ENCODE measurements at regions of chr17 and their contacts with region 1.

Region 1: GRCh38 chr17:81094509-81095382 is 59.8 kb downstream of the BAIAP2 start:
- DNase-seq: peak; percentile 96
- H3K4me3 ChIP-seq: no peak overlapping the region; the same call in 1 of the 2 replicates
- H3K27ac ChIP-seq: peak overlapping the region; percentile 90
- H3K4me1 ChIP-seq: peaks cover 59% of the 10 kb centered on the region
- H3K27me3 ChIP-seq: no peaks in the 10 kb centered on the region
- CTCF ChIP-seq: no peak

Region 2: DNA sequence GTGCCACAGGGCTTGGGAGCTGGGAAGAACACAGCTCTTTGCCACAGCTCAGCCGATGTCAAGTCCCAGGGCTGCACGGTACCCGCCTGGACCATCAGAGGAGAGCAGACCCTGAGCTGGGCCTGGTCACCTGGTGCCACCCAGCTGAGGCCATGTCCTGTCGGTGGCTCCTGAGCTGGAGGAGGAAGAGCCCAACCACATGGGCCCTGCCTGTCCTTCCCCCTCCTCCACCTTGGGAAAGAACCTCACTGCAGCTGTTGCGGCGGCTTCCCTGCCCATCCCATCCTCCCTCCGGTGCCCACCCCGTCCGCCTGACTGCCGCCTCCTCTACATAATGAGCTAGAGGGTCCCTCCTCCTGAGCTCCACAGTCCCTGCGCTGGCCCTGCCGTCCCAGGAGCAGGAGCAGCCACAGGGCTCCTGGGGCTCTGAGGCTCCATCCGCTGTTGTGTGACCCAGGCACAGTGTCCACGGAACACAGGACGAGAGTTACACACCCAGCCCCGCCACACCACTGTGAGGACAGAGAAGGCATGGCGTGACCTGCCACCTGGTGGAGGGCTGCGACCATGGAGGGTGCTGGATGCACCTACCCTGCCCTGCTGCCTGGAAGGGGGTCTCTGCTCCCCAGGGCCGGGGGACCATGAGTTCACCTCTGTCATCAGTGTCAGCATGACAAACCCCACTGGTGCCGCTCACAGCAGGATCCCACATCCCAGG is 124.5 kb before region 1 on chr17:
- CTCF ChIA-PET with region 1: interaction called, 11 read pairs
- POLR2A ChIA-PET with region 1: no interaction called
- intact Hi-C with region 1: no loop called
- DNase-seq: peak in 1 of 2 experiments; percentile 37
- H3K4me3 ChIP-seq: no peak overlapping the region
- H3K27ac ChIP-seq: no peak overlapping the region
- H3K4me1 ChIP-seq: no peaks in the 10 kb centered on the region
- H3K27me3 ChIP-seq: no peaks in the 10 kb centered on the region
- CTCF ChIP-seq: peak; percentile 41; the same call in 1 of the 2 replicates

Region 3: DNA sequence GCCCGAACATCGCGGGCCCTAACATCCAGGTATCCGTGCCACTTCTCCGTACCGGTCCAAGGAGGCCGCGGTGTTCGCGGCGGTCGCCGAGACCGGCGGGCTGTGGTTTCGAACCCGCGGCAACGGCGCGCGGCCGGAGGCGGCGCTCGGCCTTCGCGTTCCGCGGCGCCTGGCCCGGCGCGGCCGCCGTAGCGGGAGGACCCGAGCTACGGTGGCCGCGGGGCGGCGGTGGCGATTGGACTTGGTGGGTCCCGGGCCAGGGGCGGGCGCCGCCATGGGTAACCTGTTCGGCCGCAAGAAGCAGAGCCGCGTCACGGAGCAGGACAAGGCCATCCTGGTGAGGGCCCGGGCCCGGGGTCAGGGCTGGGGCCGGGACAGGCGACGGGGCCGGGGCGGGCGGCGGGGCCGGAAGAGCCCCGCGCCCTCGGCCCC is 103.1 kb before region 1 on chr17 and contains the start of gene CHMP6:
- CTCF ChIA-PET with region 1: no interaction called
- POLR2A ChIA-PET with region 1: no interaction called
- intact Hi-C with region 1: loop called (anchors 1 kb)
- DNase-seq: peak; percentile 37 to 71
- H3K4me3 ChIP-seq: peak within 1 kb of the TSS; percentile 74
- H3K27ac ChIP-seq: no peak within 1 kb of the TSS
- H3K4me1 ChIP-seq: peaks cover 16% of the 10 kb centered on the region
- H3K27me3 ChIP-seq: no peaks in the 10 kb centered on the region
- CTCF ChIP-seq: peak; percentile 35; the same call in 1 of the 2 replicates
- total RNA-seq, gene CHMP6: 17.4 and 18.1 TPM in 2 replicates

Region 4: DNA sequence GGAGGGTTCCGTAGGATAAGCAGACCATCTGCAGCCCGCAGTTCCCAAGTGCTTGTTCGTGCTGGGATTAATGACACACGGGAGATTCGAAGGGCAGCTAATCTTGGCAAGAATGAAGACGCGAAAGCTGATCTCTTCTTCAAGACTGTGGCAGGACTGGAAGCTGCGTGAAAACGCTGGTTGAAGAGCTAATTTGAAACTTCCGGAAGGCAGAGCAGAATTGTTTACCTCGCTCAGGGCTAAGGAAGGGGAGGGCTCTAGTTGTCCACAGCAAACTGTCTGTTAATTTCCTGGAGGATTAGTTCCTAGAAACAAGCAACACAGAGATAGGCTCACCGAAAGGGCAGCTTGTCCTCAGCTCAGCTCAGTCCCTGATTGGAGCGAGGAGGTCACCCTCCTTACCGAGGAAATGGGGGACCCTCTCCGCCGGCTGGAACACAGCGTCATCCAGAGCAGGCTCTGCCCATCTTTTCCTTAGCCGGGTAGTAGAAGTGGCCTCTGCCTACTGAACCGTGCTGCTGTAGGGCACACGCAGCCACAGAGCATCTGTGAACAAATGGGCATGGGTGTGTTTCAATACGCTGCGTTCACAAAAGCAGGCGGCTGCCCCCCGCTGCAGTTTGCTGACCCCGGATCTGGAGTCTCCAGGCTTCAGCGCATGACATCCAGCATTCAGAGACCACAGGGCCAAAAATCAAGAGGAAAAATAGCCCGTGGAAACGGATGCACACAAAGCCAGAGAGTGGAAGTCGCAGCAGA is 76.5 kb before region 1 on chr17:
- CTCF ChIA-PET with region 1: interaction called, 10 read pairs
- POLR2A ChIA-PET with region 1: interaction called, 18 read pairs
- intact Hi-C with region 1: no loop called
- DNase-seq: no peak
- H3K4me3 ChIP-seq: no peak overlapping the region
- H3K27ac ChIP-seq: no peak overlapping the region
- H3K4me1 ChIP-seq: no peaks in the 10 kb centered on the region
- H3K27me3 ChIP-seq: no peaks in the 10 kb centered on the region
- CTCF ChIP-seq: no peak

Region 5: DNA sequence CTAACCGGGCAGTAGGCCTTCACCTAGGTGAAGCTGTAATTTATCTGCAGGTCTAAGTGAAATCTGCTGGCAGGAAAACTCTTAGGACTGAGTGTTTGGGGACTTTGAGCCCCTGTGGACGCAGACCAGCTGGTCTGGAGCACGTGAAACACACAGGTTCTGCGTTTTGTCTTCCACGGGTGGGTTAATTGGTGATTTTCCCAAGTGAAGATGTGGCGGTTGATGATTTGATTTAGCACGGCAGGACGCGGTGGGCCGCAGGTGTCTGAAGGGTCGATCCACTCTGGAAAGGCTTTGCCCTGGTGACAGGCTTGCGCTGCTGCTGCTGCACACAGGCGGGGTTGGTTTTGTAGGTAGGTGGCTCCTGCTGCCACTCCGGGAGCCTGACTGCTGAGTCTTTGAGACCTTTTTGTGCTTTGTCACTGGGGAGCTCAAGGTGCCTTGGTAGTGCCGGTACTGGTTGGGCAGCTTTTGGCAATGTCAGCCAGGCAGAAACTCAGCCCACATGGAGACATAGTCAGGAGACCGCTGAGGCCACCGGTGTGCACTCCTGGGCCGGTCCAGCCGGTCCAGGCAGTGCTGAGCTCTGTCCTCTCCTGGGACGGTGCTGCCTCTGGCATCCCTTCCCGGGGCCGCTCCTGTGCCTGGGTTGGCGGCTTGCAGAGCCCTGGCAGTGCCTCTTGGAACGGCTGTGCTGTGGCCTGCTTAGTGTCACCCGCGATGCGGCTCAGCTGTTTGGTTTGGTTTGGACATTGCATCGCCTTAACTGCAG is 57.5 kb before region 1 on chr17:
- CTCF ChIA-PET with region 1: interaction called, 4 read pairs
- POLR2A ChIA-PET with region 1: interaction called, 10 read pairs
- intact Hi-C with region 1: loop called (anchors 1 kb)
- DNase-seq: peak; percentile 95 to 96
- H3K4me3 ChIP-seq: peak overlapping the region; percentile 66
- H3K27ac ChIP-seq: peak overlapping the region; percentile 93
- H3K4me1 ChIP-seq: peaks cover 51% of the 10 kb centered on the region
- H3K27me3 ChIP-seq: no peaks in the 10 kb centered on the region
- CTCF ChIP-seq: no peak

Region 6: DNA sequence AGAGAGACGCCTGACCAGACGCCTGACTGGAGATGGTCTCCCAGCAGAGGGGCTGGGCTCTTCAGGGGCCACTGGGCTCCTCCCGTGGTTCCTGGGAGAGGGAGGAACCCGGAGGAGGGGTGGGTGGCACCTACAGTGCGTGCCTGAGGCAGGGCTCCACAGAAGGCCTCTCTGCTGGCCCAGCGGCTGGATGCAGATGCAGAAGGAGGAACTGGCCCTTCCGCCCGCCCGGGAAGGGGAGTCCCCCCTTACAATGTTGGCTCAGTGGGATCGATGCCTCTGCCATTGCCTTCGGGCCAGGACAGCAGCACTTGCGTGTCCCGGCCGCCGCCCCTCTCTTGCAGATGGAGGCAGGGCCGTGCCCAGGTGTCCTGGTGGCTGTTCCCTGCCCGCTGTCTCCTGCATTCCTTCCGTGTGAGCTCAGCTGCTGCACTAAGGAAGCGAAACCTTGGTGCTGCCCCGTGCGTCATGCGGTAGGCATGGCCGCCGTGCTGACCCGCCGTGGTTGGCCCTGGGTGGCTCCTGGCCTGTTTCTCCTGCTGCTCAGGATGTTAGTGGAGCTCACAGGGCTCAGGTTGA is 44.7 kb before region 1 on chr17:
- CTCF ChIA-PET with region 1: no interaction called
- POLR2A ChIA-PET with region 1: interaction called, 4 read pairs
- intact Hi-C with region 1: loop called (anchors 1 kb)
- DNase-seq: peak; percentile 96 to 97
- H3K4me3 ChIP-seq: peak overlapping the region; percentile 41; the same call in 1 of the 2 replicates
- H3K27ac ChIP-seq: peak overlapping the region; percentile 87
- H3K4me1 ChIP-seq: peaks cover 56% of the 10 kb centered on the region
- H3K27me3 ChIP-seq: no peaks in the 10 kb centered on the region
- CTCF ChIP-seq: no peak

Region 7: DNA sequence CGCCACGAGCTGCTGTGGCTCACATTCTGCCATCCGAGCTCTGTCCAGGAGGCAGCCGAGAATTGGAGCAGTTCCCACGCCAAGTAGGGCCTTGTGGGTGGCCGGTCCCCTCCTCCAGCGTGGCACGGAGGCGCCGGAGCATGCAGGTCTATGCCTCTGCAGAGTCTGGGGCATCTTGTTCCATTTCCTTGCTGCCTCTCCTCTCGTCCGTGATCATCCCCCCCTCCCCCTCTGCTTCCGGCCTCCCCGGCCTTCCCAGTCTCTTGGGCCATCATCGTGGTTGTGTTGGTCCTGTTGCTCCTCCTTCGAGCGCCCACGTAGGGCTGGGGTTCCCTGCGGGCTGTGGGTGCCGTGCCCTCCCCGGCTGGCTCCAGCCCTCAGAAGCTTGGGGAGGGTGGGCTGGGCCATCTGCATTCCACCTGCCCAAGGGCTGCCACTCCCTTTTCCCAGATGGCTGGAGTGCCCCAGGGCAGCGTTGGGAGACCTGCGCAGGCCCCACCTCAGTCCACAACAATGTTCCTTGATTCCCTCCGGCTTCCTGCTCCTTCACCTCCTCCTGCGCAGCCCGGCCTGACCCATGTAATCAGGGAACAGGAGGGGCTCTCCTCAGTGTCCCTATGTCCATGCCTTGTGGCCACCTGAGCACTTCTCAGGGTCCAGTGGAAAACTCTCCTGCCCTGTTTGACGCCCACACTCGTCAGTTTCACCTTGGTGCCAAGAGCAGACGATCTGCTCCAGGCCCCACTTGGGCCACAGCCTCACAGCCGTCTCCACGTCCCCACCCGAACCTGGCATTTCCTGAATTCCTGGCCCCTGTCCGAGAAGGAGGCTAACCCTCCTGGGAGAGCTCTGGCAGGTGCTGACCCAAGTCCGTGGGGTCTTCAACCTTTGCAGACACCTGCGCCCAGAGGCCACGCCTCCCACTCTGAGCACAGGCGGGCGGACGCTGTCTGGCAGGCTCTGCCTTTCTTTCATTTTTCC is 22.7 kb before region 1 on chr17:
- CTCF ChIA-PET with region 1: no interaction called
- POLR2A ChIA-PET with region 1: interaction called, 9 read pairs
- intact Hi-C with region 1: loop called (anchors 1 kb)
- DNase-seq: peak; percentile 63 to 97
- H3K4me3 ChIP-seq: no peak overlapping the region
- H3K27ac ChIP-seq: 0 out of 2 replicates have a peak overlapping the region, but pooled peaks have one; percentile 19
- H3K4me1 ChIP-seq: no peaks in the 10 kb centered on the region
- H3K27me3 ChIP-seq: no peaks in the 10 kb centered on the region
- CTCF ChIP-seq: no peak

Region 8: DNA sequence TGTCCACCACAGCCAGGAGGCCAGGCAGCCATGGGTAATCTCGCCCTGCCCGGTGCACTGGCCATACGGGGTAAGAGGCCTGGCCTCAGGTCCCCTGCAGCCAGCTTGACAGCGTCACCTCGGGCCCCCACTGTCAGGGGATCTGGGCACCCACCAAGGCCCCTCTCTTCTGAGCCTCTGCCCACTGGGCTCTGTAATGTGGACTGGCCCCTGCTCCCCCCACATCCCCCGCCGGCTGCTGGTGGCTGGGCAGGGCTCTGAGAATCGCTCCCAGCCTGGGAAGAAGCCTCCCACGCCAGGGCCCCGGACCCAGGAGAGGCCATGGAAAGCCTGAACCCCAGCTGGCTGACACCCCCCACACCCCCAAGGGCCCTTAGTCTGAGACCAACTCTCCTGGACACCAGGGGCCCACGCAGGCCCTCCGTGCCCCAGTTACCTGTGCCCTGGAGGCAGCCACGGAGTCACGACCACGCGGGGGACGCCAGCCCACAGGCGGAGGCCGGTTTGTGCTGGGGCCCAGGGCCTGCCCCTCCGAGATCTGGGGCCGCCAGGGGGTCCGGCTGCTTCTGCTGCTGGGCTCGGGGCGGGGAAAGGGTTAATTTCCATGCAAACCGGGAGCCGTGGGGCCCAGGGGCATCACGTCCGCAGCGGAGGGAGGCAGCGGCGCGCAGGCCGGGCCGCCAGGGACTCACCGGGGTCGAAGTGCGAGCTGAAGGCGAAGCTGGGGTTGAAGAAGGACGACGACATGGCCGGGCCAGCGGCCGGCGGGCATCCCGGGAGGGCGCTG is 70.7 kb after region 1 on chr17 and contains the start of gene PVALEF:
- CTCF ChIA-PET with region 1: no interaction called
- POLR2A ChIA-PET with region 1: no interaction called
- intact Hi-C with region 1: no loop called
- DNase-seq: no peak
- H3K4me3 ChIP-seq: no peak within 1 kb of the TSS
- H3K27ac ChIP-seq: no peak within 1 kb of the TSS
- H3K4me1 ChIP-seq: no peaks in the 10 kb centered on the region
- H3K27me3 ChIP-seq: peaks cover 21% of the 10 kb centered on the region
- CTCF ChIP-seq: no peak
- total RNA-seq, gene PVALEF: not detected in 2 replicates

Measured in PC-9 (cell line).